ENCODE measurements at regions of chr4 and their contacts with region 1.

Region 1: GRCh38 chr4:113952452-113953029 is 26.9 kb downstream of the ARSJ start:
- DNase-seq: peak; percentile 12
- ATAC-seq: peak; percentile 94
- H3K4me3 ChIP-seq: no peak overlapping the region
- H3K27ac ChIP-seq: no peak overlapping the region
- H3K4me1 ChIP-seq: no peaks in the 10 kb centered on the region
- H3K27me3 ChIP-seq: no peaks in the 10 kb centered on the region
- CTCF ChIP-seq: peak; percentile 69 to 84 (median 71)
- EP300 ChIP-seq: no peak
- POLR2A ChIP-seq: no peak
- RAD21 ChIP-seq: peak; percentile 85

Region 2: DNA sequence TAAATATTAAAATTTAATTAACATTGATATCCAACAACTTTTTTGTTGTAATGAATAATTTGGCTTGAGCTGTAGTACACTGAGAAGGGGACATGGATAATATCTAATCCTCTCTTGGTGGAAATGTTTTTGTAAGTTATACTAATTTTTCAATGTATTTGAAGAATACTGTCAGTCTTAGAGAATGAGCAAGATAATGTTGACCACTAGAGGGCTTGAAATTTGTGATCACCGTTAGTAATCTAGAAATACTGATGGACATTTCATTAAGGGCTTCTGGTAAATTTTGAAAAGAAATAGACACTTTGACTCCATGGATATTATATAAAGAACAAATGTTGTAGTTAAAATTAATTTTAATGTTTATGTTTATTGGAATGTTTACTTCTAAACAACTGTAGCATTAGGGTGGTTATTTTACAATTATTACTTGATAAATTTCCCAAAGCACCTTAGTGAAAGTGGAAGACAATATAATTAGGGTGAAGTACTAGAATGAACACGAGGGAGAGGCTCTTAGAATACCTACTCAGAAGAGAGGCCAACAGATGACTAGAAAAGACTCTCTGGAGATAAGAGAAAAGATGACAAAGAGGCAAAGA is 171.0 kb before region 1 on chr4:
- CTCF ChIA-PET with region 1: interaction called, 3 read pairs
- POLR2A ChIA-PET with region 1: no interaction called
- RAD21 ChIA-PET with region 1: interaction called, 3 read pairs
- SMC1A ChIA-PET with region 1: interaction called, 4 read pairs
- in situ Hi-C with region 1: no loop called
- intact Hi-C with region 1: loop called (anchors 5 kb)
- DNase-seq: no peak
- ATAC-seq: peak; percentile 80
- H3K4me3 ChIP-seq: no peak overlapping the region
- H3K27ac ChIP-seq: no peak overlapping the region
- H3K4me1 ChIP-seq: no peaks in the 10 kb centered on the region
- H3K27me3 ChIP-seq: no peaks in the 10 kb centered on the region
- CTCF ChIP-seq: peak; percentile 45 to 47 (median 47); a peak in 4 of 6 replicates
- EP300 ChIP-seq: no peak
- POLR2A ChIP-seq: no peak
- RAD21 ChIP-seq: peak; percentile 65

Region 3: DNA sequence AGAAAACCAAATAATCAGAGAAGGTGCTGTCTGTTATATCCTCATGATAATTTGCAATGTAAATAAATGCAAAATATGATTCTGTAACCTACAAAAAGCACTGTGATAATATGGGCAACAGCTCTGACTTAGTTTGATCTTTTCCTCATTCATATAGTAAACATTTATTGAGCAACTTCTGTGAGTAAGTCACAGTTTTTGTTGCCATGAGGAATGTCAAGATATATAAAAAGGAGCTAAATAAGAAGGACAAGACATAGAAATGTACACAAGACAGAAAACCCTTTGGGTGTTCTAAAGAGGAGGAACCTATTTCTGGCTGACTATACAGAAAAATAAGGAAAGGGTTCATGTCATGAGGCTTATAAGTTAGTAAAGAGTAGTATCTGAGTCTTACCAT is 17.4 kb before region 1 on chr4:
- CTCF ChIA-PET with region 1: interaction called, 8 read pairs
- POLR2A ChIA-PET with region 1: no interaction called
- RAD21 ChIA-PET with region 1: interaction called, 4 read pairs
- SMC1A ChIA-PET with region 1: interaction called, 13 read pairs
- in situ Hi-C with region 1: no loop called
- intact Hi-C with region 1: no loop called
- DNase-seq: no peak
- ATAC-seq: no peak
- H3K4me3 ChIP-seq: no peak overlapping the region
- H3K27ac ChIP-seq: no peak overlapping the region
- H3K4me1 ChIP-seq: no peaks in the 10 kb centered on the region
- H3K27me3 ChIP-seq: no peaks in the 10 kb centered on the region
- CTCF ChIP-seq: no peak
- EP300 ChIP-seq: no peak
- POLR2A ChIP-seq: no peak
- RAD21 ChIP-seq: no peak

Region 4: DNA sequence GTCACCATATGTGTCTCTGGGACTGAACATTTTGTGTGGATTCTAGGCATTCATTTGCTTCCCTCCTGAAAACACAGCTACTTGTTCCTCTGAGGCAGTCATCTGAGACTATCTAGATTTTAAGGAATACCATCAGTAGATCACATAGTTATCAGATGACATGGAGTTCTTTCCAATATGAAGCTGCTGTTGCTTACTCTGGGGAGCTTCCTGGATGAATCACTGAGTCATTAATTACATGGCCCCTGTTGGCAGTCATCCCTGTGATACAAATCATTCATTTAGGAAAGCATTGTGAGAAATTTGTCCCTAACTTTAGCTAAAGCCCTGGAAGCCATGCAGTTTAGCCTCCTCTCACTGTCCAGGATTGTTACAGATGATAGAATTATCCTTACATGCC is 125.1 kb after region 1 on chr4:
- CTCF ChIA-PET with region 1: interaction called, 94 read pairs
- POLR2A ChIA-PET with region 1: interaction called, 3 read pairs
- RAD21 ChIA-PET with region 1: interaction called, 60 read pairs
- SMC1A ChIA-PET with region 1: interaction called, 145 read pairs
- in situ Hi-C with region 1: no loop called
- intact Hi-C with region 1: no loop called
- DNase-seq: no peak
- ATAC-seq: no peak
- H3K4me3 ChIP-seq: no peak overlapping the region
- H3K27ac ChIP-seq: no peak overlapping the region
- H3K4me1 ChIP-seq: no peaks in the 10 kb centered on the region
- H3K27me3 ChIP-seq: no peaks in the 10 kb centered on the region
- CTCF ChIP-seq: no peak
- EP300 ChIP-seq: no peak
- POLR2A ChIP-seq: no peak
- RAD21 ChIP-seq: no peak

Region 5: DNA sequence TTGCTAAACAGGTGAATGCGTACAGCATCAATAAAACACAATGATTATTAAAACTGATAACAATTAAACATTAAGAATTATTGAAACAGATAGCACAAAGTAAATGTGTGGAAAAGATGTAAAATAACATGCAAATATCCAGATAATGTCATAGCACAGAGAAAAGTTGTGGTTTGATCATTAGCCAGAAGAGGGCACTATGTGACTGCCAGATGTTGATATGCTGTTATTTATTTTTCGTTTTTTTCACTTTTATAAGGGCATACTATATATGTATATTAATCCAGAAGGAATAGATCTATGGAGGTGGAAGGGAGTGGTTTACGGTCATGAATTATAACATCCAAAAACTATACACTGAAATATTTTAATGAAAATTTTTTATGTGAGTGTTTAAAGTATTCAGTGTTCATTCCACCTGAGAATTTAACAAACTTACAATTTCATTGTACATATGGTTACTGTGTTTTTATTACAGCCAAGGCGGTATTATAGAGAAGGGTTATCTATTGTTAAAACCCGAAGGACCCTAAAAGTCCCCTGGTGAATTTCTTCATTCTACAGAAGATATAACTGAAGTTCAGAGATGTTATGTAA is 434.2 kb after region 1 on chr4:
- CTCF ChIA-PET with region 1: interaction called, 16 read pairs
- POLR2A ChIA-PET with region 1: no interaction called
- RAD21 ChIA-PET with region 1: interaction called, 4 read pairs
- SMC1A ChIA-PET with region 1: interaction called, 5 read pairs
- in situ Hi-C with region 1: loop called (anchors 10 kb)
- intact Hi-C with region 1: loop called (anchors 1 kb)
- DNase-seq: peak; percentile 5
- ATAC-seq: peak; percentile 67
- H3K4me3 ChIP-seq: no peak overlapping the region
- H3K27ac ChIP-seq: no peak overlapping the region
- H3K4me1 ChIP-seq: no peaks in the 10 kb centered on the region
- H3K27me3 ChIP-seq: no peaks in the 10 kb centered on the region
- CTCF ChIP-seq: peak; percentile 49 to 76 (median 53)
- EP300 ChIP-seq: no peak
- POLR2A ChIP-seq: no peak
- RAD21 ChIP-seq: peak; percentile 92

Region 6: DNA sequence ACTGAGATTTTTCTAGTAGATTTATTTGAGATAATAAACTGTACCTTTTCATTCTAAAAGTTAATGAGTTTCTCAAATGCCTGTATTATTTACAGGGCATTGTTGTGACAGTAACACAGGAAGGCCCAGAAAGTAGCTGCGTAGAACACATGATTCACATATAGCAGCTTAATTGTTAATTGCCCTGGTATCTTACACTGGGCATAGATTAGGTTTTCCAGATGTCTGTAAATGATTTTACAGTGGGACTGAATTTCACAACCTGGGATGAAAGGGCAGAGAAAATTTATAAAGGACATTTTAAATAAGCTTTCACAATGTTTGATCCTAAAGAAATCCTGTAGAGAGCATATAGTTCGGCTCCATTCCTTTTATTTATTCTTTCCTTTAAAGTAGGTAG is 673.7 kb after region 1 on chr4:
- CTCF ChIA-PET with region 1: no interaction called
- POLR2A ChIA-PET with region 1: no interaction called
- RAD21 ChIA-PET with region 1: no interaction called
- SMC1A ChIA-PET with region 1: no interaction called
- in situ Hi-C with region 1: no loop called
- intact Hi-C with region 1: no loop called
- DNase-seq: no peak
- ATAC-seq: no peak
- H3K4me3 ChIP-seq: no peak overlapping the region
- H3K27ac ChIP-seq: no peak overlapping the region
- H3K4me1 ChIP-seq: no peaks in the 10 kb centered on the region
- H3K27me3 ChIP-seq: no peaks in the 10 kb centered on the region; a peak in 1 of 4 replicates
- CTCF ChIP-seq: no peak
- EP300 ChIP-seq: no peak
- POLR2A ChIP-seq: no peak
- RAD21 ChIP-seq: no peak